HepG2 (cell line): ENCODE measurements at regions of chr19 and their contacts with region 1.

Region 1: DNA sequence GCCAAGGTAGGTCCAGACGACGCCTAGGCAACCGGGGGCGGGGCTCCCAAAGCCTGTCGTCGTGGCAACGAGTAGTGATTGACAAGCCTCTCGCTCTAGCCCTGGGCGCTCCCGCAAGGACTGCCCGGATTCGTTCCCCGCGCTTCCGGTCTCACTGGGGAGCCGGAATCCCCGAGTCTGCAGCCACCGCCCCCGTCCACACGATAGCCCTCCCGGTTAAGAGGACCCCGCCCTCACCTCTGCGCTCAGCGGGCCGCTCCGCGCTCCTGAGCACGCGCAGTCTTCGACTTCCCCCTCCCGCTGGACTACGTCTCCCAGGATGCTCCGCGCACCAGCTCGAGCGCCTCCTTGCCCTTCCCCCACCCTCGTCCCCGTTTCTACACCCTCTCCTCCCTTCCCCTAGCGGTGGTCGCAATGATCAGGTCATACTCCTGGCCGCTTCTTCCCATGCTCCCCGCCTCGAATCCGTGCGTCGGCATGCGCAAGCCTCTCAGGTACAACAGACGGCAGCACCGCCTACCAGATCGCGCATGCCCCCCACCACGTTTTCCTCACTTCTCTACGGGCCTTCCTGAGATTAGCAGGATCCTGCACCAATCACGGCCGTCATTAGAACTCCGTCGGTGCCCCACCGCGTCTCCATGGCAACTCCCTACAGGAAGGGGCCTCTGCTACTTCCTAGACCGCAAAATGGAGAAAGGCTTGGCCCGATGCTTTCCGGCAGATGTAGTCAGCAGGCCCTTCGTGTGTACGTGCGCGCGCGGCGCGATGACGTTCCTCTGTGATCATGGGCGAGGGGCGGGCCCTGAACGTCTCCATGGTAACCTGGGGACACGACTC is at the start of gene MZF1:
- DNase-seq: peak; percentile 99
- ATAC-seq: peak; percentile 74
- H3K4me3 ChIP-seq: peak within 1 kb of the TSS; percentile 80 to 86 (median 82)
- H3K27ac ChIP-seq: peak within 1 kb of the TSS; percentile 93
- H3K4me1 ChIP-seq: peaks cover 24% of the 10 kb centered on the region
- H3K27me3 ChIP-seq: no peaks in the 10 kb centered on the region
- CTCF ChIP-seq: peak; percentile 50
- EP300 ChIP-seq: peak in 1 of 2 experiments; percentile 44; a peak in 1 of 4 replicates
- POLR2A ChIP-seq: peak; percentile 23 to 59; a peak in 2 of 4 replicates
- RAD21 ChIP-seq: no peak; the same call in 1 of the 2 replicates
- total RNA-seq, gene MZF1: 1.3 and 3.1 TPM in 2 replicates

Region 2: GRCh38 chr19:58492265-58492664 is 80.8 kb before region 1 on chr19:
- CTCF ChIA-PET with region 1: no interaction called
- POLR2A ChIA-PET with region 1: no interaction called
- in situ Hi-C with region 1: no loop called
- intact Hi-C with region 1: no loop called
- DNase-seq: no peak
- ATAC-seq: no peak
- H3K4me3 ChIP-seq: no peak overlapping the region
- H3K27ac ChIP-seq: no peak overlapping the region
- H3K4me1 ChIP-seq: peaks cover 7% of the 10 kb centered on the region; the same call in 1 of the 2 replicates
- H3K27me3 ChIP-seq: no peaks in the 10 kb centered on the region
- CTCF ChIP-seq: no peak
- EP300 ChIP-seq: no peak
- POLR2A ChIP-seq: no peak
- RAD21 ChIP-seq: no peak

Region 3: GRCh38 chr19:58531034-58531840 is 41.8 kb before region 1 on chr19:
- CTCF ChIA-PET with region 1: no interaction called
- POLR2A ChIA-PET with region 1: no interaction called
- in situ Hi-C with region 1: no loop called
- intact Hi-C with region 1: no loop called
- DNase-seq: no peak
- ATAC-seq: no peak
- H3K4me3 ChIP-seq: no peak overlapping the region
- H3K27ac ChIP-seq: no peak overlapping the region
- H3K4me1 ChIP-seq: peaks cover 15% of the 10 kb centered on the region; the same call in 1 of the 2 replicates
- H3K27me3 ChIP-seq: no peaks in the 10 kb centered on the region; a peak in 1 of 5 replicates
- CTCF ChIP-seq: no peak
- EP300 ChIP-seq: no peak
- POLR2A ChIP-seq: no peak
- RAD21 ChIP-seq: no peak

Region 4: GRCh38 chr19:58543826-58544590 is 29.0 kb before region 1 on chr19 and contains the start of gene TRIM28:
- CTCF ChIA-PET with region 1: no interaction called
- POLR2A ChIA-PET with region 1: interaction called, 11 read pairs
- in situ Hi-C with region 1: no loop called
- intact Hi-C with region 1: no loop called
- DNase-seq: peak; percentile 96
- ATAC-seq: peak; percentile 92
- H3K4me3 ChIP-seq: peak within 1 kb of the TSS; percentile 91 to 99 (median 96)
- H3K27ac ChIP-seq: peak within 1 kb of the TSS; percentile 80
- H3K4me1 ChIP-seq: peaks cover 24% of the 10 kb centered on the region
- H3K27me3 ChIP-seq: no peaks in the 10 kb centered on the region; a peak in 2 of 5 replicates
- CTCF ChIP-seq: no peak
- EP300 ChIP-seq: no peak; a peak in 1 of 4 replicates
- POLR2A ChIP-seq: peak; percentile 85 to 97
- RAD21 ChIP-seq: no peak; the same call in 1 of the 2 replicates
- total RNA-seq, gene TRIM28: 302 and 361 TPM in 2 replicates